SK-N-SH (cell line): ENCODE measurements at regions of chr12 and their contacts with region 1.

Region 1: DNA sequence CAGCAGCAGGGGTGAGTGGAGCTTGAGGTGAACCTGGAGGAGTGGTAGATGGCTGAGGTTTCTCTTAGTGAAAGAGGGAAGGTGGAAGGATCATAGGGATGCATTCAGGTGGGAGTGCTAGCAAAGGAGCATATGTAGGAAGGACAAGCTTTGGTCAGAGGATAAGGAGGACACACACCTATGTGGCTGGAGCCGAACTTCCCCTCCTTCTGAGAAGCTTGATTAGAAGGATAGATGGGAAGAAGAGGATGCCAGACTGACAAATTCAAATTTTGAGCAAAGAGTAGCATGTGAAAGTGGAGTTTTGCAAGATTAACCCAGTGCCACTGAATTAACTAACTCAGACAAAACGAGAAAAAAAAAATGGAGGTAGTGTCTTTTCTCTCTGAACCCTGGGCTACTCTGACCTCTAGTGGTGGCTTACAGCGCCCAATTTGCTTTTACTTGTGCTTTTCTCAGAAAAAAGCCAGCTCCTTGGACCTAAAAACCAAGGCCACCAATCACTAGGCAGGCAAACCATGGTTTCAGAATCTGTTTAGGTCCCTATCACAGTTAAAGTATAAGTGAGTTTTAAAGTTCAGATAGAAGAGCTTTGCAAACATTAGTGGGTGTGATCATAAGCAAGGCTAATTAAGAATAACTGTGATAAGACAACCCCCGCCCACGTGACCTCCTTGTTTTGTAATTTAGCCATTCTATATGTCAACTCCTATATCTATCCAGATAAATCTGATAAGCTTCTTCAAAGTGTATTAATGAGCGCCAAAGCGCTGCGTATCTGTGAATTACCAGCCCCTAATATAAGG is 15.5 kb downstream of the EMP1 start:
- DNase-seq: peak; percentile 56
- H3K4me3 ChIP-seq: 0 out of 4 replicates have a peak overlapping the region, but pooled peaks of 1 of the 2 experiments have one; percentile 14
- H3K27ac ChIP-seq: peak overlapping the region in 1 of 2 experiments; percentile 100; a peak in 2 of 4 replicates
- H3K4me1 ChIP-seq: peaks cover 7 to 46% of the 10 kb centered on the region in 2 experiments
- H3K27me3 ChIP-seq: no peaks in the 10 kb centered on the region
- CTCF ChIP-seq: peak; percentile 94
- EP300 ChIP-seq: no peak
- RAD21 ChIP-seq: peak; percentile 93

Region 2: DNA sequence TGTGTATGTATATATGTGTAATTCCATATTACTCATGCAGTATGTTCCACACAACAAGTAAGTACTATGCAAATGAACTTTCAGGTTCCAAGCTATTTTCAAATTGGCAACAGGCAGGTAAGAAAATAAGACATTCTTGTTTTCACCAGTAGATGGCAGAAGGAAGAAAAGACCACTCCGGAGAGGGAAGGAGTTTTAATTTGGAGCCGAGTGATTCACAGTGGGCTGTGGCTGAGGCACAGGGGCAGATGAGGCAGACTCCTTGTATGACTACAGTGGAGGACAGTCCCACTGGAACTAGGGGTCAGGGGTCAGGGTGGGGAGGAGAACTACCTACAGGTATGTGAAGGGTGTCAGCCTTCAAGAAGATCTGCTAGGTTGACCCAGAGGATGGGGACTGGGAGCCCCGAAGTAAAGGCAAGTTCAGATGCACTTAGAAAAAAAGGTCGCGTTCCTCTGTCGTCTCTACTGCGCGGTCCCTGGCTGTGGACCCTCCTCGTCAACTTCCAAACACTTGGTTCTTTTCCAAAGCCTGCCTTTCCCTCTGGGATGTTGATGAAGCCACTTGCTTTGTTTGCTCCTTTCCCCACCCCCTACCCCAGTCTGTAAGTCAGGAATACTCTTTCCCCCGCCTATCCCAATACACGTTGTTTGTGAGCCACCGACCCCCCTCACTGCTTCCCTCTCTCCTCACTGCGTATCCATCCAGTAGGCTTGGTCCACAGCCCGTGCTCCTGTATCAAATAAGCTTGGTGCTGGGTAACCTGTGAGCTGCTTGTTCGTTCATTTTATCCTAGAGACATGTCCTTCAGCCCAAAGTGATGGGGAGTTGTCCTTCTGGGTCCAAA is 374.8 kb before region 1 on chr12:
- CTCF ChIA-PET with region 1: interaction called, 12 read pairs
- POLR2A ChIA-PET with region 1: no interaction called
- DNase-seq: peak; percentile 66
- H3K4me3 ChIP-seq: no peak overlapping the region
- H3K27ac ChIP-seq: peak overlapping the region in 1 of 2 experiments; percentile 76; a peak in 1 of 4 replicates
- H3K4me1 ChIP-seq: peaks cover 0 to 39% of the 10 kb centered on the region in 2 experiments; a peak in 3 of 4 replicates
- H3K27me3 ChIP-seq: no peaks in the 10 kb centered on the region
- CTCF ChIP-seq: peak; percentile 74
- EP300 ChIP-seq: no peak
- RAD21 ChIP-seq: peak; percentile 60

Region 3: GRCh38 chr12:12922191-12922616 is 289.9 kb before region 1 on chr12:
- CTCF ChIA-PET with region 1: interaction called, 129 read pairs
- POLR2A ChIA-PET with region 1: no interaction called
- DNase-seq: no peak
- H3K4me3 ChIP-seq: no peak overlapping the region
- H3K27ac ChIP-seq: no peak overlapping the region
- H3K4me1 ChIP-seq: peaks cover 0 to 4% of the 10 kb centered on the region in 2 experiments; a peak in 1 of 4 replicates
- H3K27me3 ChIP-seq: no peaks in the 10 kb centered on the region
- CTCF ChIP-seq: no peak
- EP300 ChIP-seq: no peak
- RAD21 ChIP-seq: no peak

Region 4: DNA sequence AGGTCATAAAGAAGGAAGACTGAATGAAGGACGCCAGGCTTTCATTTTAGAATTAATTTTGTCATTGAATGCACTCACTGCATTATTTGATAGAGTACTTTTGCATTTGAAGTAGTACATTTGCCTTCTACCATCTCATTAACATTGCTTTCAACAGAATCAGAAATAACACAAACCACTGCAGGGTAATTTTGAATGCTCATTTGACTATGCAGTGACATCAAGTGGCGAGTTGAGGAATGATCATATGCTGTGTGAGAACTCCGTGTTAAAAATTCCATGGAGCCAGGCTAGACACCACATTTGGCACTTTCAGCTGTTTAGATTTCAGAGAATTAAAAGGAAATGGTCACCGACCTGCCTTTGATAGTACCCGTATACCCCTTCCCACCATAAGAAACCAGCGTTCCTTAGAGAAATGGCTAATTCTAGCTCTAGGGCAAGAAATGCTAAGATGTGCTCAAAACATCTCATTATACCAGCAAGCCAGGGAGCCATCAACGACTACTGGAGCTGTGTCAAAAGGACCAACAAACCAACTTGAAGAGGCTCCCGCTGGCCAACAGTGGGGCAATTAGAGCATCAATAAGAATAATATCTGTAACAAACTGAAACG is 228.5 kb before region 1 on chr12:
- CTCF ChIA-PET with region 1: interaction called, 40 read pairs
- POLR2A ChIA-PET with region 1: no interaction called
- DNase-seq: peak; percentile 45
- H3K4me3 ChIP-seq: no peak overlapping the region; a peak in 1 of 4 replicates
- H3K27ac ChIP-seq: no peak overlapping the region
- H3K4me1 ChIP-seq: peaks cover 2 to 12% of the 10 kb centered on the region in 2 experiments; a peak in 2 of 4 replicates
- H3K27me3 ChIP-seq: no peaks in the 10 kb centered on the region
- CTCF ChIP-seq: peak; percentile 78
- EP300 ChIP-seq: no peak
- RAD21 ChIP-seq: peak; percentile 78

Region 5: GRCh38 chr12:13088496-13088895 is 123.6 kb before region 1 on chr12:
- CTCF ChIA-PET with region 1: interaction called, 13 read pairs
- POLR2A ChIA-PET with region 1: no interaction called
- DNase-seq: no peak
- H3K4me3 ChIP-seq: no peak overlapping the region
- H3K27ac ChIP-seq: no peak overlapping the region
- H3K4me1 ChIP-seq: peaks cover 0 to 5% of the 10 kb centered on the region in 2 experiments; a peak in 2 of 4 replicates
- H3K27me3 ChIP-seq: no peaks in the 10 kb centered on the region
- CTCF ChIP-seq: no peak
- EP300 ChIP-seq: no peak
- RAD21 ChIP-seq: no peak

Region 6: DNA sequence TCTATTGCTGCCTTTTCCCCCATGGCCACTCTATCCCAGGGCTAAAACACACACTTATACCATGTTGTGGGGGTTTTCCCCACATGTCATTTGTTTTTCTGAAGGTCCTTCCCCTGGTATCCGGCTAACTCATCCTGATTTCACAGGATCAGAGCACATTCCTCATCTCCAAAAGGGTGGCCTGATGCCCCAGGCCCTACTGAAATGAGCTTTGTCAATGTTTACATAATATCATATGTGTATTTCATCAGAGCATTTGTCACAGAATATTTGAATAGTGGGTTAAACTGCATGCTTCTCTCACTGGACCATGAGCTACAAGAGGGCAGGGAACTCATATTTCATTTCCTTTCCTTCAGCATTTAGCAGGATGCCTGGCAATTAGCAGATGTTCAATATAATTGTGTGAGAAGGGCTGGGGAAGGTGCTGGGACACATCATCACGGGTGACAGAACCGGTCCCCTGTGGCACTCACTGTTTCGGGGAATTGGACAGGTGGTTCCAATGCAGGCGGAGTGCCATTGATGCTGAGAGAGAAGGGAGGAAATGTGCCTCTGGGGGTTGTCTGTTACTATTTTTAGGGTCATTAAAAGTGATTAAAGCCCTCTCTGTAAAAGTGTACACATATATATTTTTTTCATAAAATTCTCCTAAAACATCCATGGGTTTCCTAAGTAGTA is 11.3 kb after region 1 on chr12:
- CTCF ChIA-PET with region 1: interaction called, 58 read pairs
- POLR2A ChIA-PET with region 1: no interaction called
- DNase-seq: no peak
- H3K4me3 ChIP-seq: no peak overlapping the region
- H3K27ac ChIP-seq: no peak overlapping the region
- H3K4me1 ChIP-seq: no peaks in the 10 kb centered on the region
- H3K27me3 ChIP-seq: no peaks in the 10 kb centered on the region
- CTCF ChIP-seq: no peak
- EP300 ChIP-seq: no peak
- RAD21 ChIP-seq: no peak

Region 7: DNA sequence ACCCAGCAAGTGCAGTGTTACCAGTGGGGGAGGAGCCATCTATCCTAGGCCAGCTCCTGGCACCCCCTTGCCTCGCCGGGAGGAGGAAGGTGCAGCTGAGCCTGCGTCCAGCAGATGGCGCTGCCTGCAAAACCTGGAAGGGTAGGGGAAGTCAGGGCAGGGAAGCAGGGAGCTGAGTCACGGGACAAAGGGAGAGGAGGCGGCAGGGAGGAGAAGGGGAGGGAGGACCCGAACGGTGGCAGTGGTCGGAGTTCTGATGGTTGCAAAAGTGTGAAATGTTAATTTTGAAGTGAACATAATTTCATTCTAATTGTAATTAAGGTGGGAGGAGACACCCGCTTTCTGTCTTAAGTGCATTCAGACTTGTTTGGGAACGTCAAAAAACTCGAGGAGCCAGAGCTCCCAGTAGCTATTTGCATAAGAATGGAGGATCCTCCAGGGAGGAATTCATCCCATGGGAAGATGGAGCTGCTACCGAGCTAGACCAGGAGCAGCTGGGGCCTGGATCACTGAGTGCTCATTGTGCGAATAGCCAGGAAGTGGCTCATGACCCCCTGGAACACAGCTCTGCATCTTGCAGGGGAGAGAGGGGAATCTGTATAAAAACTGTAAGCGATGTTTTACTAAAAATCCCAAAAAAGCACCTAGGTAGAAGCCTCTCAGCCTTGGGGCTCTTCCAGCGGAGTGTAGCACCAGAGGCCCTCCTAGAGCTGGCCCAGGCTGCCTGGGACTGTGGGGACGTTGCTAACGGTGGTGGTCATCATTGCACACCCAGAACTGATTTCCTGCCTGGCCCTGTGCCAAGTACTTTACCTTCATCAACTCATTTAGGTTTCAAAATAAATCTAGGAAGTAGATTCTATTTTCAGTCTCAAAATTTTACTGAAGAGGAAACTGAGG is 44.0 kb after region 1 on chr12:
- CTCF ChIA-PET with region 1: interaction called, 14 read pairs
- POLR2A ChIA-PET with region 1: no interaction called
- DNase-seq: peak; percentile 87
- H3K4me3 ChIP-seq: peak overlapping the region; percentile 30 to 59; a peak in 3 of 4 replicates
- H3K27ac ChIP-seq: no peak overlapping the region
- H3K4me1 ChIP-seq: peaks cover 0 to 4% of the 10 kb centered on the region in 2 experiments; a peak in 1 of 4 replicates
- H3K27me3 ChIP-seq: no peaks in the 10 kb centered on the region; the same call in 1 of the 2 replicates
- CTCF ChIP-seq: peak; percentile 99
- EP300 ChIP-seq: peak in 1 of 2 experiments; percentile 16; a peak in 1 of 4 replicates
- RAD21 ChIP-seq: peak; percentile 75

Region 8: GRCh38 chr12:13504074-13504473 is 292.0 kb after region 1 on chr12:
- CTCF ChIA-PET with region 1: no interaction called
- POLR2A ChIA-PET with region 1: no interaction called
- DNase-seq: no peak
- H3K4me3 ChIP-seq: no peak overlapping the region
- H3K27ac ChIP-seq: no peak overlapping the region
- H3K4me1 ChIP-seq: no peaks in the 10 kb centered on the region
- H3K27me3 ChIP-seq: no peaks in the 10 kb centered on the region; the same call in 1 of the 2 replicates
- CTCF ChIP-seq: no peak
- EP300 ChIP-seq: no peak
- RAD21 ChIP-seq: no peak